MCF 10A (cell line): ENCODE measurements at regions of chr20 and their contacts with region 1.

Region 1: GRCh38 chr20:3051385-3052019 is 5.7 kb downstream of the MRPS26 start:
- DNase-seq: no peak
- H3K4me3 Mint-ChIP-seq: no peak overlapping the region
- H3K27ac Mint-ChIP-seq: no peak overlapping the region
- H3K4me1 Mint-ChIP-seq: peaks cover 6% of the 10 kb centered on the region
- H3K27me3 Mint-ChIP-seq: no peaks in the 10 kb centered on the region
- CTCF ChIP-seq: no peak

Region 2: GRCh38 chr20:3068986-3069900 is 17.7 kb after region 1 on chr20:
- CTCF ChIA-PET with region 1: interaction called, 13 read pairs
- POLR2A ChIA-PET with region 1: no interaction called
- intact Hi-C with region 1: no loop called
- DNase-seq: no peak
- H3K4me3 Mint-ChIP-seq: no peak overlapping the region
- H3K27ac Mint-ChIP-seq: no peak overlapping the region
- H3K4me1 Mint-ChIP-seq: peaks cover 11% of the 10 kb centered on the region
- H3K27me3 Mint-ChIP-seq: no peaks in the 10 kb centered on the region
- CTCF ChIP-seq: no peak

Region 3: DNA sequence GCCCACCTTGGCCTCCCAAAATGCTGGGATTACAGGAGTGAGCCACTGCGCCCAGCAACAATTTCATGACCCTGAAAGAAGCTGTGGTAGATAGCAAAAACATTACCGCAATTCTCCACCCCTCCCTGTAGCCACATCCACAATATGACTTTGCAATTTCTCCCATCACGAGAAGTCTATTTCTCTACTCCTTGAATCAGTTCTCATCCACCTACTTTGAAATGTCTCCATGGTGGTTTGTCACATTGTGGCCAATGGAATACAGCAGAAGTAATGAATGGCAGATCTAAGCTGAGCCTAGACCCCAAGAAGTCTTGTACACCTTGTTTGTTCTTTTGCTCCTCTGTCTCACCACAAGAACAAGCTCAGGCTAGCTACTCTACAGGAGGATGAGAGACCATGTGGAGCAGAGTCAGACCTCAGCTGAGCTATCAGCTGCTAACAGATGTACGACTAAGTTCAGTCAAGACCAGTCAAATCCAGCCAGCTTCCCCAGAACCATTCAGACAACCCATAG is 26.2 kb after region 1 on chr20:
- CTCF ChIA-PET with region 1: interaction called, 25 read pairs
- POLR2A ChIA-PET with region 1: interaction called, 5 read pairs
- intact Hi-C with region 1: loop called (anchors 1 kb)
- DNase-seq: no peak
- H3K4me3 Mint-ChIP-seq: no peak overlapping the region
- H3K27ac Mint-ChIP-seq: no peak overlapping the region
- H3K4me1 Mint-ChIP-seq: peaks cover 16% of the 10 kb centered on the region
- H3K27me3 Mint-ChIP-seq: peaks cover 37% of the 10 kb centered on the region
- CTCF ChIP-seq: no peak

Region 4: GRCh38 chr20:3101737-3102574 is 50.5 kb after region 1 on chr20:
- CTCF ChIA-PET with region 1: interaction called, 12 read pairs
- POLR2A ChIA-PET with region 1: interaction called, 3 read pairs
- intact Hi-C with region 1: no loop called
- DNase-seq: no peak
- H3K4me3 Mint-ChIP-seq: no peak overlapping the region
- H3K27ac Mint-ChIP-seq: no peak overlapping the region
- H3K4me1 Mint-ChIP-seq: peaks cover 5% of the 10 kb centered on the region
- H3K27me3 Mint-ChIP-seq: no peaks in the 10 kb centered on the region
- CTCF ChIP-seq: no peak

Region 5: DNA sequence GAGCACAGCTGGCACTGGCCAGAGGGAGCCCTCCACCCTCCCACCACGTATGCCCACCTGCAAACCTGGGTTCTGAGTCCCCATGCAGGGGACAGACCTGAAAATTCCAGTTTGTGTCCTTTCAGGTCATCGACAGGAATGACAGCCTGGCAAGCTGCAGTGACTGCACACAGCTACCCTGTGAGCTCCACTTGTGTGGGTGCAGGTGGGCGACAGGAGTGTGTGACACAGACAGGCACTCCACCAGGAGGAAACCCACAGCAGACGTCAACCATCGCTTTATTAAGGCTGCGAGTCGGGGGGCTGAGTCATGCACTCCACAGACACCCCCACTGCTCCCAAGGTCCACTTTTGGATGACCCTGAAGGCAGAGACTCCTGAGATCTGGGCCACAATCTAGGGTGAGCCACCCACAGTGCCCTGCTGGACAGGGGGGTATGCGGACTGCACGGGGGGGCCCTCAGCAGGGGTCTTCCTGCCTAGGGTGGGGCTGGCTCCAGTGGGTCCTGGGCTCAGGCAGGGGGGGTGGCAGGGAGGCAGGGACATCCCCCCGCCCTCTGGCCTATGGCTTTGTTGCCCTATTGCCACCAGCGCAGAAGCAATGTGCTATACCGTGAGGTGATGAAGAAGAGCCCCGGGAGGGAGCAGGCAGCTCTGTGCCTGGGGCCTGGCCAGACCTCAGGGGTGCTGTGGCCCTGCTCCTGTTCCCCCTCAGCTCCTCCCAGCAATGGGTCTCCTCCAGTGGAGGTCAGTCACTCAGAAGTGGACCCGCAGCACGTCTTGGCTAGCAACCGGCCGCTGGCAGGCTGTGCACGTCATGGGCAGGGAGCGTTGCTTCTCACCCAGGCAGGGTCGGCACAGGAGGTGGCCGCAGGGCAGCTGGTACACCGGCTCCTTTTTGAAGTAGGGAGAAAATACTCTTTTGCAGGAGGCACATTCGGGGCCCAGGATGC is 58.1 kb after region 1 on chr20:
- CTCF ChIA-PET with region 1: interaction called, 105 read pairs
- POLR2A ChIA-PET with region 1: no interaction called
- intact Hi-C with region 1: no loop called
- DNase-seq: no peak
- H3K4me3 Mint-ChIP-seq: no peak overlapping the region
- H3K27ac Mint-ChIP-seq: no peak overlapping the region
- H3K4me1 Mint-ChIP-seq: no peaks in the 10 kb centered on the region
- H3K27me3 Mint-ChIP-seq: no peaks in the 10 kb centered on the region
- CTCF ChIP-seq: no peak

Region 6: DNA sequence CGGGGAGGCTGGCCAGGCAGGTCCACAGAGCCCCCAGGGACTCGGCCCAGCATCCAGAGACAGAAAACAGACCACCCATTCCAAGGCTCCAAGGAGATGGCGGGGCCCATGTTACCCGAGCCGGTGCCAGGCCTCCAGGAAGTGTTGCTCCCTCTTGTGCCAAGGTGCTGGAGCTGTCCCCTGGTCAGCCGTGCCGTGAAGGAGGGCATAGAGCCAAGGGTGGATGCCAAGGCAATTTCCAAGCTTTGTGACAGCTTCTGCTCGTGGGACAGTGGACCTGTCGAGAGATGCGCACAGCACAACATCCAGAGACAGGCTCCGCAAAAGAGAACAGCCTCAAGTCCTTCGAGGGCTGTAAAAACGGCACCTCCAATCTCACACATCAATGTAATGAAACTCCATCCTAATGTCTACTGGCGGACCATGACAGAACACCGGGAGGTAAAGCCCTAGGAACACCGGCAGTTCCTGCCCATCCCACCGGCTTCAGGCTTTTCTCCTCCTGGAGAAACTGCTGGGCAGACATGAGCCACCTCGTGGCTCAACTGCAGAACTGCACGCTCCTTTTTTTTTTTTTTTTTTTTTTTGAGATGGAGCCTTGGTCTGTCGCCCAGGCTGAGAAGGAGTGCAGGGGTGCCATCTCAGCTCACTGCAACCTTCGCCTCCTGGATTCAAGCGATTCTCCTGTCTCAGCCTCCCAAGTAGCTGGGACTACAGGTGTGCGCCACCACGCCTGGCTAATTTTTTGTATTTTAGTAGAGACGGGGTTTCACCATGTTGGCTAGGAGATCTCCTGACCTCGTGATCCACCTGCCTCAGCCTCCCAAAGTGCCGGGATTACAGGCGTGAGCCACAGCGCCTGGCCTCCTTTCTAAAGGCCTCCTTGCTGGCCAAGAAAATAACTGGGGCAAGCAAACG is 63.9 kb after region 1 on chr20:
- CTCF ChIA-PET with region 1: interaction called, 105 read pairs
- POLR2A ChIA-PET with region 1: no interaction called
- intact Hi-C with region 1: loop called (anchors 1 kb)
- DNase-seq: peak; percentile 52
- H3K4me3 Mint-ChIP-seq: no peak overlapping the region
- H3K27ac Mint-ChIP-seq: no peak overlapping the region
- H3K4me1 Mint-ChIP-seq: peaks cover 8% of the 10 kb centered on the region
- H3K27me3 Mint-ChIP-seq: no peaks in the 10 kb centered on the region
- CTCF ChIP-seq: peak; percentile 47

Region 7: GRCh38 chr20:3173610-3174441 is 122.3 kb after region 1 on chr20:
- CTCF ChIA-PET with region 1: interaction called, 3 read pairs
- POLR2A ChIA-PET with region 1: no interaction called
- intact Hi-C with region 1: loop called (anchors 10 kb)
- DNase-seq: peak; percentile 83
- H3K4me3 Mint-ChIP-seq: peak overlapping the region; percentile 93
- H3K27ac Mint-ChIP-seq: peak overlapping the region; percentile 86
- H3K4me1 Mint-ChIP-seq: peaks cover 14% of the 10 kb centered on the region
- H3K27me3 Mint-ChIP-seq: no peaks in the 10 kb centered on the region
- CTCF ChIP-seq: peak; percentile 16

Region 8: GRCh38 chr20:3632311-3633004 is 581.0 kb after region 1 on chr20:
- CTCF ChIA-PET with region 1: no interaction called
- POLR2A ChIA-PET with region 1: no interaction called
- intact Hi-C with region 1: no loop called
- DNase-seq: no peak
- H3K4me3 Mint-ChIP-seq: no peak overlapping the region
- H3K27ac Mint-ChIP-seq: no peak overlapping the region
- H3K4me1 Mint-ChIP-seq: no peaks in the 10 kb centered on the region
- H3K27me3 Mint-ChIP-seq: no peaks in the 10 kb centered on the region
- CTCF ChIP-seq: peak; percentile 12